CD8-positive, alpha-beta T cell (primary cell): ENCODE measurements at regions of chr12 and their contacts with region 1.

Region 1: DNA sequence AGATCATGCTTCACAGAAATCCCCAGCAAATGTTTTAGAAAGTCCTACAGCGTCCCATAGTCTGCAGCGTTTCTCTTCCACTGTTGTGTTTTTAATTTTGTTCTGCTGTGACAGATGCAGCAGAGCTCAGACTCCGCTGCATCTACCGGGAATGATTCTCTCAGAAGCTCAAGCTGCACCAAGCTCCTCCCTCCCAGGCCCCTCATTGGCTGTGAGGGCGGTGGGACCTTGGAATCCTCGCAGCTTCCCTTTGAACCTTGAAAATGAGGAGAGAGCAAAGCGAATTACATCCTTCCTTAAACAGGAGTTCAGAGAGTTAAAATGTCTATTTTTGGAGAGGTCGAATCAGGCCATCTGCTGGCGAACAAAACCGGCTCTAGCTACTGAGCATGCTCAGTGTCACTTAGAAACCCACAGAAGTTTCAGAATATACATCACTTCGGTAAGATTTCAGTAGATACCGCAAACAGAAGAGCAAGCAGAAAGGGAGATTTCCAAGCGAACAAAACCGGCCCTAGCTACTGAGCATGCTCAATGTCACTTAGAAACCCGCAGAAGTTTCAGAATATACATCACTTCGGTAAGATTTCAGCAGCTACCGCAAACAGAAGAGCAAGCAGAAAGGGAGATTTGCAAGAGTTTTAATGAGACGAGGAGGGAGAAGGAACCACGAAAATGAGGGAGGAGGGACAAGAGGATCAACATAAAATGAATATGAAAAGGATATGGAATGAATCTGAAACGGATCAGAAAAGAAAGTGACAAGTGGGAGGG is at the start of gene ABCD2:
- DNase-seq: peak; percentile 41 to 95 (median 73)
- ATAC-seq: peak; percentile 80
- H3K4me3 ChIP-seq: peak within 1 kb of the TSS; percentile 62 to 73
- H3K4me3 Mint-ChIP-seq: no peak within 1 kb of the TSS
- H3K27ac ChIP-seq: peak within 1 kb of the TSS; percentile 71 to 81
- H3K27ac Mint-ChIP-seq: no peak within 1 kb of the TSS
- H3K4me1 ChIP-seq: peaks cover 33% of the 10 kb centered on the region
- H3K4me1 Mint-ChIP-seq: peaks cover 42% of the 10 kb centered on the region
- H3K27me3 ChIP-seq: no peaks in the 10 kb centered on the region
- H3K27me3 Mint-ChIP-seq: no peaks in the 10 kb centered on the region
- CTCF ChIP-seq: peak; percentile 17
- total RNA-seq, gene ABCD2: 3.4 to 3.5 TPM

Region 2: GRCh38 chr12:39252628-39253027 is 367.2 kb before region 1 on chr12:
- CTCF ChIA-PET with region 1: no interaction called
- POLR2A ChIA-PET with region 1: no interaction called
- intact Hi-C with region 1: no loop called
- DNase-seq: no peak
- ATAC-seq: no peak
- H3K4me3 ChIP-seq: no peak overlapping the region
- H3K4me3 Mint-ChIP-seq: no peak overlapping the region
- H3K27ac ChIP-seq: no peak overlapping the region
- H3K27ac Mint-ChIP-seq: no peak overlapping the region
- H3K4me1 ChIP-seq: no peaks in the 10 kb centered on the region
- H3K4me1 Mint-ChIP-seq: no peaks in the 10 kb centered on the region
- H3K27me3 ChIP-seq: no peaks in the 10 kb centered on the region
- H3K27me3 Mint-ChIP-seq: peaks cover 3% of the 10 kb centered on the region
- CTCF ChIP-seq: no peak

Region 3: GRCh38 chr12:39443081-39443928 is 176.5 kb before region 1 on chr12 and contains the start of gene KIF21A:
- CTCF ChIA-PET with region 1: interaction called, 3 read pairs
- POLR2A ChIA-PET with region 1: interaction called, 5 read pairs
- intact Hi-C with region 1: loop called (anchors 2 to 5 kb)
- DNase-seq: peak; percentile 78 to 96 (median 86)
- ATAC-seq: peak; percentile 87
- H3K4me3 ChIP-seq: peak within 1 kb of the TSS; percentile 74 to 84
- H3K4me3 Mint-ChIP-seq: peak within 1 kb of the TSS; percentile 96
- H3K27ac ChIP-seq: peak within 1 kb of the TSS; percentile 55 to 74
- H3K27ac Mint-ChIP-seq: peak within 1 kb of the TSS; percentile 90
- H3K4me1 ChIP-seq: peaks cover 16% of the 10 kb centered on the region
- H3K4me1 Mint-ChIP-seq: peaks cover 18% of the 10 kb centered on the region
- H3K27me3 ChIP-seq: no peaks in the 10 kb centered on the region
- H3K27me3 Mint-ChIP-seq: peaks cover 6% of the 10 kb centered on the region
- CTCF ChIP-seq: peak; percentile 35
- total RNA-seq, gene KIF21A: 5.1 to 6.0 TPM

Region 4: GRCh38 chr12:39605501-39605900 is 14.3 kb before region 1 on chr12:
- CTCF ChIA-PET with region 1: interaction called, 9 read pairs
- POLR2A ChIA-PET with region 1: interaction called, 6 read pairs
- intact Hi-C with region 1: loop called in 1 of 2 experiments (anchors 1 kb)
- DNase-seq: no peak
- ATAC-seq: peak; percentile 54
- H3K4me3 ChIP-seq: no peak overlapping the region
- H3K4me3 Mint-ChIP-seq: no peak overlapping the region
- H3K27ac ChIP-seq: no peak overlapping the region
- H3K27ac Mint-ChIP-seq: no peak overlapping the region
- H3K4me1 ChIP-seq: peaks cover 8% of the 10 kb centered on the region
- H3K4me1 Mint-ChIP-seq: peaks cover 52% of the 10 kb centered on the region
- H3K27me3 ChIP-seq: no peaks in the 10 kb centered on the region
- H3K27me3 Mint-ChIP-seq: no peaks in the 10 kb centered on the region
- CTCF ChIP-seq: no peak

Region 5: GRCh38 chr12:39671898-39672875 is 52.3 kb after region 1 on chr12:
- CTCF ChIA-PET with region 1: interaction called, 5 read pairs
- POLR2A ChIA-PET with region 1: interaction called, 19 read pairs
- intact Hi-C with region 1: no loop called
- DNase-seq: no peak
- ATAC-seq: no peak
- H3K4me3 ChIP-seq: no peak overlapping the region
- H3K4me3 Mint-ChIP-seq: no peak overlapping the region
- H3K27ac ChIP-seq: no peak overlapping the region
- H3K27ac Mint-ChIP-seq: no peak overlapping the region
- H3K4me1 ChIP-seq: peaks cover 20% of the 10 kb centered on the region
- H3K4me1 Mint-ChIP-seq: peaks cover 49% of the 10 kb centered on the region
- H3K27me3 ChIP-seq: no peaks in the 10 kb centered on the region
- H3K27me3 Mint-ChIP-seq: no peaks in the 10 kb centered on the region
- CTCF ChIP-seq: no peak

Region 6: DNA sequence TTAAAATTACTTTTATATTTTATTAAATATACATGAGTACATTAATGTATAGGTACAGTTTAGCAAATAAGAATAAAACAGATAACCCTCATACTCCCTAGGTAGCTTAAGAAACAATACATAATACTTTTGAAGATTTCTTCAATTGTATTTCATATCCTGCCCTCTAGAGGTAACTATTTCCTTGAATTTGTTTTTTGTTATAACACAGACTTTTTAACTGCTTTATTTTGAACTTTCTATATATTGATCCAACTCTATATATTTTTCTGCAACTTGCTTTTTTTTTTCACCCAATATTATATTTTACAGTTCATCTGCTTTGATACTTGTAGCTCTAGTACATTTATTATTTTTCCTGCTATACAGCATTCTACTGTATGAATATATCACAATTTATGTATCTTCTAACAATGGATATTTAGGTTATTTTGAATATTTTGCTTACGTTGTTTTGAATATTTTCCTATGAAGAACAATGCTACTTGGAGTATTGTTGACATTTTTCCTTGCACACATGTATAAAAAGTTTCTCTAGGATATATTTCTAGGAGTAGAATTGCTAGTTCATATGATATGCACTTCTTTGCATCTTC is 72.5 kb after region 1 on chr12:
- CTCF ChIA-PET with region 1: interaction called, 10 read pairs
- POLR2A ChIA-PET with region 1: interaction called, 6 read pairs
- intact Hi-C with region 1: loop called in 1 of 2 experiments (anchors 1 kb)
- DNase-seq: peak in 2 of 9 experiments; percentile 23 to 47
- ATAC-seq: peak; percentile 58
- H3K4me3 ChIP-seq: no peak overlapping the region
- H3K4me3 Mint-ChIP-seq: no peak overlapping the region
- H3K27ac ChIP-seq: no peak overlapping the region
- H3K27ac Mint-ChIP-seq: no peak overlapping the region
- H3K4me1 ChIP-seq: peaks cover 7% of the 10 kb centered on the region
- H3K4me1 Mint-ChIP-seq: peaks cover 6% of the 10 kb centered on the region
- H3K27me3 ChIP-seq: no peaks in the 10 kb centered on the region
- H3K27me3 Mint-ChIP-seq: no peaks in the 10 kb centered on the region
- CTCF ChIP-seq: peak; percentile 61